Sciatic nerve (tissue), 2 donors: ENCODE measurements at regions of chr1 and their contacts with region 1.

Region 1: GRCh38 chr1:192170196-192170984 is 12.1 kb downstream of the RGS18 start:
- DNase-seq: no peak
- ATAC-seq: no peak

Region 2: DNA sequence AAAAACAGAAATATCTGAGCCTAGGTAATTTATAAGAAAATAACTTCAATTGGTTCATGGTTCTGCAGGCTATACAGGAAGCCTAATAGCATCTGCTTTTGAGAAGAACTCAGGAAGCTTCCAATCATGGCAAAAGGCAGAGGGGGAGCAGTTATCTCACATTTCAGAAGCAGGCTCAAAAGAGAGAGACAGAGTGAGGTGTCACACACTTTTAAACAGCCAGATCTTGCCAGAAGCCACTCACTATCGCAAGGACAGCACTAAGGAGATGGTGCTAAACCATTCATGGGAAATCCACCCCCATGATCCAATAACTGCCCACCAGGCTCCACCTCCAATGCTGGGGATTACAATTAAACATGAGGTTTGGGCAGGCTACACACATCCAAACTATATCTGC is 13.4 kb after region 1 on chr1:
- intact Hi-C with region 1: loop called (anchors 1 kb)
- DNase-seq: no peak
- ATAC-seq: no peak